MCF 10A (cell line): ENCODE measurements at regions of chr1 and their contacts with region 1.

Region 1: DNA sequence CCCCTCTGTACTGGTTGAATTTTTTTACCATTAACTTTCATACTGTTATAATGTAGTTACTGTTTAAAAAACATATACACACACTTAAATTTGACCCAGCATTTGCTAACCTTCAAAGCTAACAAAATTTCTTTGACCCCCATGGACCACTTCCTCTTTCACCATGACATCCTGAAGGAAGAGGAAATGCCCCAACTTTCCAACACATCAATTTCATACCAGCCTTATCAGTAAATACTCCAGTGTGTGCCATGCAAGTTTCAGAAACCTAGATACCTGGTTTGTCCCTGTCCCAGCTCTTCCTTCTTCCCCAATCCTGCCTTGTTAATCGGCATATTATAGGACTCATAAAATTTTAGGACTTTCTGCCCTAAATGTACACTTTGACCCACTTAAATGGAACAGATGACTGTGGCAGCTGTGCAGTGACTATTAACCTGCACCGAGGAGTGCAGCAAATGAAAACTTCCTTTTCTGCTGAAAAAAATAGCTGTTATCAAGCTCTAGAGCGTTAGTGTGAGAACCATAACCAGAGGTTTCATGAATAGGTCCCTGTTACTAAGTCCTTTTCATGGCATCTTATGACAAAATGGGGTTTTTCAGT is 54.1 kb downstream of the DTL start:
- DNase-seq: no peak
- H3K4me3 Mint-ChIP-seq: no peak overlapping the region
- H3K27ac Mint-ChIP-seq: no peak overlapping the region
- H3K4me1 Mint-ChIP-seq: peaks cover 8% of the 10 kb centered on the region
- H3K27me3 Mint-ChIP-seq: no peaks in the 10 kb centered on the region
- CTCF ChIP-seq: no peak

Region 2: GRCh38 chr1:212077051-212077450 is 12.6 kb before region 1 on chr1:
- CTCF ChIA-PET with region 1: interaction called, 54 read pairs
- POLR2A ChIA-PET with region 1: interaction called, 20 read pairs
- intact Hi-C with region 1: no loop called
- DNase-seq: peak; percentile 51
- H3K4me3 Mint-ChIP-seq: no peak overlapping the region
- H3K27ac Mint-ChIP-seq: peak overlapping the region; percentile 41
- H3K4me1 Mint-ChIP-seq: peaks cover 13% of the 10 kb centered on the region
- H3K27me3 Mint-ChIP-seq: no peaks in the 10 kb centered on the region
- CTCF ChIP-seq: no peak

Region 3: GRCh38 chr1:212234431-212235395 is 145.1 kb after region 1 on chr1:
- CTCF ChIA-PET with region 1: interaction called, 4 read pairs
- POLR2A ChIA-PET with region 1: interaction called, 3 read pairs
- intact Hi-C with region 1: loop called (anchors 5 kb)
- DNase-seq: peak; percentile 99
- H3K4me3 Mint-ChIP-seq: no peak overlapping the region
- H3K27ac Mint-ChIP-seq: peak overlapping the region; percentile 44
- H3K4me1 Mint-ChIP-seq: peaks cover 19% of the 10 kb centered on the region
- H3K27me3 Mint-ChIP-seq: no peaks in the 10 kb centered on the region
- CTCF ChIP-seq: no peak